ENCODE measurements at regions of chr17 and their contacts with region 1.

Region 1: DNA sequence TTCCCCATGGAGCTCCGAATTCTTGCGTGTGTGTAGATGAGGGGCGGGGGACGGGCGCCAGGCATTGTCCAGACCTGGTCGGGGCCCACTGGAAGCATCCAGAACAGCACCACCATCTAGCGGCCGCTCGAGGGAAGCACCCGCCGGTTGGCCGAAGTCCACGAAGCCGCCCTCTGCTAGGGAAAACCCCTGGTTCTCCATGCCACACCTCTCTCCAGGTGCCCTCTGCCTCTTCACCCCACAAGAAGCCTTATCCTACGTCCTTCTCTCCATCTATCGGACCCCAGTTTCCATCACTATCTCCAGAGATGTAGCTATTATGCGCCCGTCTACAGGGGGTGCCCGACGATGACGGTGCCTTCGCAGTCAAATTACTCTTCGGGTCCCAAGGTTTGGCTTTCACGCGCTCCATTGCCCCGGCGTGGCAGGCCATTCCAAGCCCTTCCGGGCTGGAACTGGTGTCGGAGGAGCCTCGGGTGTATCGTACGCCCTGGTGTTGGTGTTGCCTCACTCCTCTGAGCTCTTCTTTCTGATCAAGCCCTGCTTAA is 617 bp upstream of the SENP3 start:
- DNase-seq: peak; percentile 62 to 89 (median 77)
- ATAC-seq: peak; percentile 62
- H3K4me3 ChIP-seq: peak overlapping the region; percentile 91
- H3K4me3 Mint-ChIP-seq: peak overlapping the region; percentile 95
- H3K27ac ChIP-seq: peak overlapping the region; percentile 88 to 96
- H3K27ac Mint-ChIP-seq: peak overlapping the region; percentile 93
- H3K4me1 ChIP-seq: peaks cover 66% of the 10 kb centered on the region
- H3K4me1 Mint-ChIP-seq: peaks cover 40% of the 10 kb centered on the region
- H3K27me3 ChIP-seq: no peaks in the 10 kb centered on the region
- H3K27me3 Mint-ChIP-seq: no peaks in the 10 kb centered on the region
- CTCF ChIP-seq: peak; percentile 89

Region 2: DNA sequence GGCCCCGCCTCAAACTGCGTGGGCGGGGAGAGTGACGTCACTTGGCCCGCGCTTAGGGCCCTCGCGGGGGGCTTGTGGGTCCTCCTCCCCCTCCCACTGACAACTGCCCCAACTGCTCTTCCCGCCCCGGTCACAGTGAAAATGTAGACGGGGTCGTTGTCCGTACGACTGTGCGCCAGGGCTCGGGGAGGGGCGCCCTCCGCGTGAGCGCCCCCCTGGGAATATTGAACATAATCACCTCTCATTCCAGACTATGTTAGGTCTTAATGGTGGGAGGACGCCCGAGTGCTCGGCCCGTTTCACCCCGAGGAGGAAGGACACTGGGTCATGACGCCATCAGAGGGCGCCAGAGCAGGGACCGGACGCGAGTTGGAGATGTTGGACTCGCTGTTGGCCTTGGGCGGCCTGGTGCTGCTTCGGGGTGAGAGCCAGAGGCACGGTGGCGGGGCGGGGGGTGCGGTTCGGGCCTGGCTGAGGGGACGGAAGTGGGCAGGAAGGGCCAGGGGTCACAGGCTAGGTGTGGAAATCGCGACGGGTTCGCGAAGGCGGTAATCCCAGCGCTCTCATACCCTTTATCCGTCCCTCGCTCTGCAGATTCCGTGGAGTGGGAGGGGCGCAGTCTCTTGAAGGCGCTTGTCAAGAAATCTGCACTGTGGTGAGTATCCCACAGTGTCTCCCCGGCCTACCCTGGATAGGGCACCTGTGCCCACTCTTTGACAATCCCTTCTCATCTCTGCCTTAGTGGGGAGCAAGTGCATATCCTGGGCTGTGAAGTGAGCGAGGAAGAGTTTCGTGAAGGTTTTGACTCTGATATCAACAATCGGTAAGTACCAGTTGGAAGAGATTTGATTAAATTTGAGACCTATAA is 308.7 kb before region 1 on chr17 and contains the start of gene ELP5:
- CTCF ChIA-PET with region 1: no interaction called
- POLR2A ChIA-PET with region 1: no interaction called
- intact Hi-C with region 1: loop called in 1 of 2 experiments (anchors 5 kb)
- DNase-seq: peak; percentile 64 to 99 (median 80)
- ATAC-seq: peak; percentile 39
- H3K4me3 ChIP-seq: peak within 1 kb of the TSS; percentile 71
- H3K4me3 Mint-ChIP-seq: peak within 1 kb of the TSS; percentile 94
- H3K27ac ChIP-seq: peak within 1 kb of the TSS; percentile 99
- H3K27ac Mint-ChIP-seq: peak within 1 kb of the TSS; percentile 100
- H3K4me1 ChIP-seq: peaks cover 36% of the 10 kb centered on the region
- H3K4me1 Mint-ChIP-seq: peaks cover 45% of the 10 kb centered on the region
- H3K27me3 ChIP-seq: no peaks in the 10 kb centered on the region
- H3K27me3 Mint-ChIP-seq: no peaks in the 10 kb centered on the region
- CTCF ChIP-seq: peak; percentile 28
- total RNA-seq, gene ELP5: 20.1 to 21.3 TPM

Region 3: DNA sequence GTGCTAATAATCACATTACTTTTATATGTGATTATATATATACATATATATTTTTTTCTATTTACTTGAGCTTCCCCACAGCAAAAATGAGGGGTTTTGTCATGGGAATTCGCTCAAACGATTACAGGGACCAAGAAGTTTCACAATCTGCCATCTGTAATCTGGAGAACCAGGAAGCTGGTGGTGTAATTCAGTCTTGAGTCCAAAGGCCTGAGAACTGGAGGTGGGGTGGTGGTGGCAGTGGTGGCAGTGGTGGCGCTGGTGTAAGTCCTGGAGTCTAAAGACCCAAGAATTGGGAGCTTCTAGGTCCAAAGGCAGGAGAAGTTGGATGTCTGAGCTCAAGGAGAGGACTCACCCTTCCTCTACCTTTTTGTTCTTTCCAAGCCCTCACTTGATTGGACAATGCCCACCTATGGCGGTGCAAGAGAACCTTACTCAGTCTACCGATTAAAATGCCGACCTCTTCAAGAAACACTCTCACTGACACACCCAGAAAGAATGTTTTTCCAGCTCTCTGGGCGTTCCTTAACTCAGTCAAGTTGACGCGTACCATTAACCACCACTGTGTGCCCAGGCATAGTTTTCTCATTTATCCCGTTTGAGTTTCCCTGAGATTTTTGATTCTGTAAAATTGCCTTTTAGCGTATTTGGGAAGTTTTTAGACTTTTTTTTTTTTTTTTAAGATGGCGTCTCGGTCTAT is 45.0 kb before region 1 on chr17:
- CTCF ChIA-PET with region 1: interaction called, 30 read pairs
- POLR2A ChIA-PET with region 1: interaction called, 15 read pairs
- intact Hi-C with region 1: loop called (anchors 1 kb)
- DNase-seq: no peak
- ATAC-seq: no peak
- H3K4me3 ChIP-seq: no peak overlapping the region
- H3K4me3 Mint-ChIP-seq: no peak overlapping the region
- H3K27ac ChIP-seq: no peak overlapping the region
- H3K27ac Mint-ChIP-seq: no peak overlapping the region
- H3K4me1 ChIP-seq: no peaks in the 10 kb centered on the region
- H3K4me1 Mint-ChIP-seq: no peaks in the 10 kb centered on the region
- H3K27me3 ChIP-seq: no peaks in the 10 kb centered on the region
- H3K27me3 Mint-ChIP-seq: no peaks in the 10 kb centered on the region
- CTCF ChIP-seq: no peak

Region 4: GRCh38 chr17:7538050-7538449 is 23.1 kb before region 1 on chr17:
- CTCF ChIA-PET with region 1: no interaction called
- POLR2A ChIA-PET with region 1: no interaction called
- intact Hi-C with region 1: no loop called
- DNase-seq: no peak
- ATAC-seq: no peak
- H3K4me3 ChIP-seq: no peak overlapping the region
- H3K4me3 Mint-ChIP-seq: no peak overlapping the region
- H3K27ac ChIP-seq: no peak overlapping the region
- H3K27ac Mint-ChIP-seq: no peak overlapping the region
- H3K4me1 ChIP-seq: no peaks in the 10 kb centered on the region
- H3K4me1 Mint-ChIP-seq: no peaks in the 10 kb centered on the region
- H3K27me3 ChIP-seq: no peaks in the 10 kb centered on the region
- H3K27me3 Mint-ChIP-seq: no peaks in the 10 kb centered on the region
- CTCF ChIP-seq: no peak

Region 5: DNA sequence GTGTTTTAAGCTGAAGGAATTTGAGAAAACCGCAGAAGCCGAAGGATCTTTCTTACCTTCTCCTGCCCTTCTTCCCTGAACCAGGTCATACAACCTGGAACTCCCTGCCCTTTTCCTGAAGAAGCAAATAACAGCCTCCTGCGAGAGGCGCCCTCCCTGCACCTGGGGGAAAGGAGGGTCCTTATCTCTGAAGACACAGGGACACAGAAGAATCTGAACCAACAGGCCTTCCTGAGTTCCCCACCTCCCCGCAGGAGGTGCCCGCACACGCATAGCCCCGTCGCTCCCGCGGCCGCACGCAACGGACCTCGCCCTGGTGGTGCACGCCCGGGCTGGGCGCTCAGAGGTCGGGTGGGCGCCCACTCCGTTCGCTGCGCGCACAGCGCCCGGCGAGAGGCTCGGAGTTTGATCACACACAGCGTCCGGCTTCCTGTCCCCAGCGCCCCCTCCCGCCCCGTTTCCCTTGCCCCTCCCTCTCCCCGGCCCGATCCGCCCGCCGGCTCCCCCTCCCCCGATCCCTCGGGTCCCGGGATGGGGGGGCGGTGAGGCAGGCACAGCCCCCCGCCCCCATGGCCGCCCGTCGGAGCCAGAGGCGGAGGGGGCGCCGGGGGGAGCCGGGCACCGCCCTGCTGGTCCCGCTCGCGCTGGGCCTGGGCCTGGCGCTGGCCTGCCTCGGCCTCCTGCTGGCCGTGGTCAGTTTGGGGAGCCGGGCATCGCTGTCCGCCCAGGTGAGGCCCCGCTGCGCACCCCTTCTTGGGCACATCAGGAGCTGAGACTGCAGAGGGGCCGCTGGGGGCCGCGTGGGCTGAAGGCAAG is 12.3 kb before region 1 on chr17 and contains the start of gene TNFSF12:
- CTCF ChIA-PET with region 1: interaction called, 32 read pairs
- POLR2A ChIA-PET with region 1: interaction called, 17 read pairs
- intact Hi-C with region 1: no loop called
- DNase-seq: peak; percentile 22 to 77 (median 56)
- ATAC-seq: peak; percentile 19
- H3K4me3 ChIP-seq: peak within 1 kb of the TSS; percentile 87
- H3K4me3 Mint-ChIP-seq: peak within 1 kb of the TSS; percentile 91
- H3K27ac ChIP-seq: peak within 1 kb of the TSS; percentile 36 to 60
- H3K27ac Mint-ChIP-seq: peak within 1 kb of the TSS; percentile 88
- H3K4me1 ChIP-seq: peaks cover 62% of the 10 kb centered on the region
- H3K4me1 Mint-ChIP-seq: peaks cover 50% of the 10 kb centered on the region
- H3K27me3 ChIP-seq: no peaks in the 10 kb centered on the region
- H3K27me3 Mint-ChIP-seq: no peaks in the 10 kb centered on the region
- CTCF ChIP-seq: no peak
- total RNA-seq, gene TNFSF12: 17.0 to 19.1 TPM

Region 6: GRCh38 chr17:7583253-7584109 is 22.4 kb after region 1 on chr17 and contains the start of gene MPDU1:
- CTCF ChIA-PET with region 1: interaction called, 15 read pairs
- POLR2A ChIA-PET with region 1: interaction called, 28 read pairs
- intact Hi-C with region 1: no loop called
- DNase-seq: peak; percentile 89 to 98 (median 94)
- ATAC-seq: peak; percentile 85
- H3K4me3 ChIP-seq: peak within 1 kb of the TSS; percentile 86
- H3K4me3 Mint-ChIP-seq: peak within 1 kb of the TSS; percentile 98
- H3K27ac ChIP-seq: peak within 1 kb of the TSS; percentile 78 to 98
- H3K27ac Mint-ChIP-seq: peak within 1 kb of the TSS; percentile 98
- H3K4me1 ChIP-seq: peaks cover 56% of the 10 kb centered on the region
- H3K4me1 Mint-ChIP-seq: peaks cover 52% of the 10 kb centered on the region
- H3K27me3 ChIP-seq: no peaks in the 10 kb centered on the region
- H3K27me3 Mint-ChIP-seq: no peaks in the 10 kb centered on the region
- CTCF ChIP-seq: no peak
- total RNA-seq, gene MPDU1: 12.0 to 12.9 TPM

Region 7: DNA sequence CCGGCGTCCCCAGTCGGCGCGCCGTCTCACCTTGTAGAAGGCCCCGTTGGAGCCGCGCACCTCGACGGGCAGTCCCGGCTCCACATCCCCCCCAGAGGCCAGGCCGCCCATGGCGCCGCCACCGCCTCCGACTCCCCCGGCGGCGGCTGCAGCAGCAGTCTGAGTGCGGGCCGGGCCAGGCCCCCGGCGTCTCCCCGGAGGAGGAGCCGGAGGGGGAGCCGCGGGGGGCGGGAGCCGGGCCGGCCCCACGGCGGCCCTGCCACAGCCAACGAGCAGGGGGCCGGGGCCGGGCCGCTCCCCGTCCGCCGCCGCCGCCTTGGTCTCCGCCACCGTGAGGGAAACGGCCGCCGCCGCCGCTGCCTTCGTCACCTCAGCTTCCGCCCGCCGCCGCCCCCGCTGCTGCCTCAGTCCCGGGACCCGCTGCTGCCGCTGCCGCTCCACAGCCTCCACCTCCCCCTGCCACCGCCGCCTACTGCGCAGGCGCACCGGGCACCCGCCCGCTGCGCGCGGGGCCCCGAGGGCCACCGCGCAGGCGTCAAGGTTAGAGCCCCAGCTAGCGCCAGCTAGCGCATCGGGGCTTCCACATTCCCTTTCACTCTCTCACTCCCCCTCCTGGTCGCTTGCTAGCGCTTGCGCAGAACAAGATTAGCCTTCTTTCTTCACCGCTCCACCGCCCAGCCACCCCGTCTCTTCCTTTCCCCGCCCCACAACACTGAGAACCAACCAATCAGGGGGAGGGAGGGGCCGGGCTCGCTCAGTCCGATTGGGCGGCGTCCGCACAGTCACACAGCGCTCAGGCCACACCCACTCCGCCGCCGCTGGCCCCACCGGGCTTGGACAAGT is 53.5 kb after region 1 on chr17 and contains the start of gene FXR2:
- CTCF ChIA-PET with region 1: interaction called, 10 read pairs
- POLR2A ChIA-PET with region 1: interaction called, 9 read pairs
- intact Hi-C with region 1: no loop called
- DNase-seq: peak; percentile 94 to 100 (median 98)
- ATAC-seq: peak; percentile 88
- H3K4me3 ChIP-seq: peak within 1 kb of the TSS; percentile 87
- H3K4me3 Mint-ChIP-seq: peak within 1 kb of the TSS; percentile 91
- H3K27ac ChIP-seq: peak within 1 kb of the TSS; percentile 50 to 63
- H3K27ac Mint-ChIP-seq: peak within 1 kb of the TSS; percentile 99
- H3K4me1 ChIP-seq: peaks cover 36% of the 10 kb centered on the region
- H3K4me1 Mint-ChIP-seq: peaks cover 47% of the 10 kb centered on the region
- H3K27me3 ChIP-seq: no peaks in the 10 kb centered on the region
- H3K27me3 Mint-ChIP-seq: no peaks in the 10 kb centered on the region
- CTCF ChIP-seq: peak; percentile 59
- total RNA-seq, gene FXR2: 20.6 to 22.5 TPM

Region 8: GRCh38 chr17:7673239-7673638 is 112.1 kb after region 1 on chr17:
- CTCF ChIA-PET with region 1: no interaction called
- POLR2A ChIA-PET with region 1: no interaction called
- intact Hi-C with region 1: no loop called
- DNase-seq: peak in 8 of 14 experiments; percentile 8 to 44 (median 19)
- ATAC-seq: no peak
- H3K4me3 ChIP-seq: no peak overlapping the region
- H3K4me3 Mint-ChIP-seq: no peak overlapping the region
- H3K27ac ChIP-seq: no peak overlapping the region
- H3K27ac Mint-ChIP-seq: no peak overlapping the region
- H3K4me1 ChIP-seq: no peaks in the 10 kb centered on the region
- H3K4me1 Mint-ChIP-seq: peaks cover 7% of the 10 kb centered on the region
- H3K27me3 ChIP-seq: no peaks in the 10 kb centered on the region
- H3K27me3 Mint-ChIP-seq: no peaks in the 10 kb centered on the region
- CTCF ChIP-seq: peak; percentile 50